HEK293 (cell line): ENCODE measurements at regions of chr7 and their contacts with region 1.

Region 1: DNA sequence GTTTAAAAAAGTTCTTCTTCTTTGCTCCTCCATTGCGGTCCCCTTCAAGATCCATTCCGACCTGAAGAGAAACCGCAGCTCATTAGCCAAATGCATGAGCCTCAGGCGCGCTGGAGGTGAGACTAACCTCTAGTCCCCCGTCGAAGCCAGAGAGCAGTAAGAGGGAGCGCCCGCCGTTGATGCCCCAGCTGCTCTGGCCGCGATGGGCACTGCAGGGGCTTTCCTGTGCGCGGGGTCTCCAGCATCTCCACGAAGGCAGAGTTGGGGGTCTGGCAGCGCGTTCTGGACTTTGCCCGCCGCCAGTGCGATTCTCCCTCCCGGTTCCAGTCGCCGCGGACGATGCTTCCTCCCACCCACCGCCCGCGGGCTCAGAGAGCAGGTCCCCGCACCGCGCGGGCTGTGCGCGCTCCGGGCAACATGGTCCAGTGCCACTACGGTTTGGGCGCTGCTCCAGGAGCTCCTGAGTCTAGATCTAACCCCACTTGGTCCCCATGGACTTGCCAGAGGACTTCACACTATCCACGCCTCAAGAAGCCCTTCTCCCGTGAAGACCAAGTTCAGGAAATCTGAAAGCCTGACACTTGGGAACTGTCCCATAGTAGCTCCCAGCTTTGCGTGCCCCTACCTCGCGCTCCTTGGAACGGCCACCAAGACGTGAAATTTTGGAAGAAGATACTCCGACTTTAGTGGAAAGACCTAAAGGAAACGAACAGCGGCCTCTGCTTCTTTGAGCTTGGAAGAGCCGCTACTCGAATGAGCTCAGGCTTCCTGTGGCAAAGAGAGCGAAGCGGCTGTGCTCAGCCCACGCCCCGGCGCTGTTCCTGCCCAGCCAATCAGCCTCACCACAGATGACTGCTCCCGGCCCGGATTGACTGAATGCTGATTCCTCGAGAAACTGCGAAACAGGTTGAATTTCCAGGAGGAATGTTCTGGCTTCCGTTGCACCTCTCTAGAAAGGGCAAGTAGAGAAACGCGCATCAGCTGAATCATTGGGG is at the start of gene ABCB1:
- H3K4me3 ChIP-seq: peak within 1 kb of the TSS; percentile 70
- H3K27ac ChIP-seq: peak within 1 kb of the TSS; percentile 62; the same call in 1 of the 2 replicates
- H3K4me1 ChIP-seq: peaks cover 6% of the 10 kb centered on the region; the same call in 1 of the 2 replicates
- CTCF ChIP-seq: no peak

Region 2: GRCh38 chr7:87628780-87629569 is 28.5 kb after region 1 on chr7:
- CTCF ChIA-PET with region 1: no interaction called
- POLR2A ChIA-PET with region 1: interaction called, 21 read pairs
- H3K4me3 ChIP-seq: peak overlapping the region; percentile 78
- H3K27ac ChIP-seq: peak overlapping the region; percentile 61; the same call in 1 of the 2 replicates
- H3K4me1 ChIP-seq: no peaks in the 10 kb centered on the region
- CTCF ChIP-seq: no peak